Activated CD8-positive, alpha-beta T cell treated with anti-CD3 and anti-CD28 coated beads for 36 hours (primary cell): ENCODE measurements at regions of chr11 and their contacts with region 1.

Region 1: DNA sequence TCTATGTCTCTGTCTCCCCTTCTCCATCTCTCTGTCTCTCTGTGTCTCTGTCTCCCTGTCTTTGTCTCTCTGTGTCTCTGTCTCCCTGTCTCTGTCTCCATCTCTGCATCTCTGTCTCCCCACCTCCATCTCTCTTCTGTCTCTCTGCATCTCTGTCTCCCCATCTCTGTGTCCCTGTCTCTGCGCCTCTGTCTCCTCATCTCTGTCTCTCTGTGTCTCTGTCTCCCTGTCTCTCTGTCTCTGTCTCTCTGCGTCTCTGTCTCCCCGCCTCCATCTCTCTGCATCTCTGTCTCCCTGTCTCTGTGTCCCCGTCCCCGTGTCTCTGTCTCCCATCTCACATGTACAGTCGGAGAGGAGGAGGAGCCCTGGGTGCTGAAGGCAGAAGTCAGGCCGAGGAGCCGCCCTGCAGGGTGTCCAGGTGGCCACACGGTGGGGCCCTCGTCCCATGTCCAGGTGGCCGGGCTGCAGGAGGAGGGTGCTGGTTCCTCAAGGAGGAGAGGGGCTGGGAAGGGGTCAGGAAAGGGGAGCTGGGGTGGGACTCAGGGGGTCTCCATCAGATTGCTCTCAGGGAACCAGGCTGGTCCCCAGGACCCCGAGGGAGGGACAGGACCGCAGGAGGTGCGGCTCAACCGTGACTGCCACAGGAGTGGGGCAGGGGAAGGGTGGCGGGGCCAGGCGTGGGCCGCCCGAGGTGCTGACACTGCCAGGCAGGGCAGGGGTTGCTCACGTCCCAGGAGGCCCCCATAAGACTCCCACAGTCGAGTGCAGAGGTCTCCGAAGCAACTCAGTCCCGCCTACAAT is 25.6 kb upstream of the TH start:
- DNase-seq: peak; percentile 86
- ATAC-seq: peak; percentile 98
- H3K4me3 Mint-ChIP-seq: no peak overlapping the region
- H3K27ac Mint-ChIP-seq: no peak overlapping the region
- H3K4me1 Mint-ChIP-seq: peaks cover 3% of the 10 kb centered on the region
- H3K27me3 Mint-ChIP-seq: peaks cover 9% of the 10 kb centered on the region
- CTCF ChIP-seq: peak; percentile 81

Region 2: DNA sequence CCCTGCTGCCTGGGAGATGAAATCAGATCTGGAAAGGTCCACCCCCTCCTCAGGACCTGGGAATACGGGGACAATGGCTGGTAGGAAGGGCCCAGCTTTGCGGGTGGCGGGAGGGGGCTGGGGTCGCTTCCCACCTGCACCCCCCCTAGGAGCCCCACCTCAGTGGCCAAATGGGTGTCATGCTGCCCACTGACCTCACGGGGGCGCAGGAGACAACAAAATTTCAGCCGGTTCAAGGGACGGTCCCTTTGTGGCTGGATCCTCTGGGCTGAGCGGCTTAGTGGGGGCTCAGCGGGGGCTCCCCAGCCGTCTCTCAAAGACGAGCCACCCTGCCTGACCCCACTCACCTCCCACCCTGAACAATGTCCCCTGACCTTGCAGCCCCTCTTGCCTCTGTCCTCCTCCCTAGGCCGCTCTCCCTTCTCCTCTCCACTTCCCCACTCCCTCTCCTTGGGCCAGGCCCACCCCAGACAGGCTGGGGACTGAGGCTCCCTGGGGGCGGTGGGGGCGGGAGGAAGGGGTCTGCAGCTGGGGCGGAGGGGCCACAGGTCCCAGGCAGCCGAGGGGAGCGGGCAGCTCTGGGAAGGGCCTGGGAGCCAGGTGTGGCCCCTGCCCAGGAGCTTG is 160.2 kb before region 1 on chr11:
- CTCF ChIA-PET with region 1: no interaction called
- POLR2A ChIA-PET with region 1: no interaction called
- intact Hi-C with region 1: no loop called
- DNase-seq: no peak
- ATAC-seq: peak; percentile 79
- H3K4me3 Mint-ChIP-seq: no peak overlapping the region
- H3K27ac Mint-ChIP-seq: no peak overlapping the region
- H3K4me1 Mint-ChIP-seq: no peaks in the 10 kb centered on the region
- H3K27me3 Mint-ChIP-seq: no peaks in the 10 kb centered on the region
- CTCF ChIP-seq: no peak

Region 3: GRCh38 chr11:2213384-2213842 is 16.2 kb after region 1 on chr11:
- CTCF ChIA-PET with region 1: interaction called, 6 read pairs
- POLR2A ChIA-PET with region 1: no interaction called
- intact Hi-C with region 1: loop called (anchors 1 kb)
- DNase-seq: peak; percentile 73
- ATAC-seq: peak; percentile 90
- H3K4me3 Mint-ChIP-seq: peak overlapping the region; percentile 19
- H3K27ac Mint-ChIP-seq: peak overlapping the region; percentile 50
- H3K4me1 Mint-ChIP-seq: peaks cover 10% of the 10 kb centered on the region
- H3K27me3 Mint-ChIP-seq: no peaks in the 10 kb centered on the region
- CTCF ChIP-seq: no peak

Region 4: GRCh38 chr11:2298795-2299761 is 101.9 kb after region 1 on chr11:
- CTCF ChIA-PET with region 1: interaction called, 52 read pairs
- POLR2A ChIA-PET with region 1: interaction called, 4 read pairs
- intact Hi-C with region 1: loop called (anchors 2 kb)
- DNase-seq: peak; percentile 74
- ATAC-seq: peak; percentile 27
- H3K4me3 Mint-ChIP-seq: peak overlapping the region; percentile 35
- H3K27ac Mint-ChIP-seq: peak overlapping the region; percentile 57
- H3K4me1 Mint-ChIP-seq: peaks cover 56% of the 10 kb centered on the region
- H3K27me3 Mint-ChIP-seq: no peaks in the 10 kb centered on the region
- CTCF ChIP-seq: peak; percentile 59